Activated CD4-positive, alpha-beta memory T cell treated with anti-CD3 and anti-CD28 coated beads for 36 hours (primary cell): ENCODE measurements at regions of chr7 and their contacts with region 1.

Region 1: DNA sequence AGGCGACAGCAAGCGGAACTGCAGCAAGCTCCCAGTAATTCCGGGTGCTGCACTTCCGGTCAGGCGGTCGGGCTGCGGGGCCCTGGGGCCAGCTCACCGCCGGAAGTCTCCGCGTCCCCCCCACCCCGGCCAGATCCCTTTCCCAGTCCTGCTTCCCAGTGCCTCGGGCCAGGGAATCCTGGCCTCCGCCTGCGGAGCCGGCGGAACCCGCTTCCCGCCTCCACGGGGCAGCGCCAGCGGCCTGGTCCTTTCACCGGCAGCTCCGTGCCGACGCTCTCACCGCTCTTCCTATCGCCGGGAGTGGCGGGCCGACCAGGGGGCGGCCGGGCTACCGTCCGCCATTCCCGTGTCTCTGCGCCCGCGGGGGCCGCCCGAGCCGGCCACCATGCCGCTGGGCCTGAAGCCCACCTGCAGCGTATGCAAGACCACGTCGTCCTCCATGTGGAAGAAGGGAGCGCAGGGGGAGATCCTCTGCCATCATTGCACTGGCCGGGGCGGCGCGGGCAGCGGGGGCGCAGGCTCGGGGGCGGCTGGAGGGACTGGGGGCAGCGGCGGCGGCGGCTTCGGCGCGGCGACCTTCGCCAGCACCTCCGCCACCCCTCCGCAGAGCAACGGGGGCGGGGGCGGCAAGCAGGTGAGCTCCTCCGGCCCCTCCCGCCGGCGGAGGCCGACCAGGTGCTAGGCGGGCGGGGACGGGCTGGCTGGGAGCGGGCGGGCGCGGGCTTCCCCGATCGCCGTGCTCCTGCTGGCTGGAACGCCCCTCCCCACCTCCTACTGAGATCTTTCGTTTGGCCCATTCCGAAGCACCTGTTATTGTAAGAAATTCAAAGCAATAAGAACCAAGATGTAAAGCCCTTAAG is at the start of gene GATAD1:
- DNase-seq: peak; percentile 88
- H3K4me3 Mint-ChIP-seq: peak within 1 kb of the TSS; percentile 82
- H3K27ac Mint-ChIP-seq: peak within 1 kb of the TSS; percentile 81
- H3K4me1 Mint-ChIP-seq: peaks cover 16% of the 10 kb centered on the region
- H3K27me3 Mint-ChIP-seq: no peaks in the 10 kb centered on the region
- total RNA-seq, gene GATAD1: 19.4 to 21.2 TPM

Region 2: DNA sequence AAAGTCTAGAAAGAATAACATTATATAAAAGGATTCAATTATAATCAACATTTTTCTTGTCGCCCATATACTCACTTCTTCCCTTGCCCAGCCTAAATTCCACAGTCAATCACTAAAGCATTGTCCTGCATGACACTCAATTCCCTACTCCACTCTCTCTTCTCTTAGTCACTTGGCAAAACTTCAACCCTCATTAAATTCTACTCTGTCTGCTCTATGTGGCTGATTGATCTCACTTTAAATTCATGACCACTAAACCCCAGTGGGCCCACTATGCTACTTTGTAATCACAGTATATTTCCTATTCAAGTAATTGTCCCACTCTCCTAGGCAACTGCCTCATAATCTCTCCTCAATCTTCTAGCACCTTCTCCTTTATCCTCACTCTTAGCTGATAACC is 621.2 kb before region 1 on chr7:
- CTCF ChIA-PET with region 1: interaction called, 15 read pairs
- POLR2A ChIA-PET with region 1: no interaction called
- intact Hi-C with region 1: loop called (anchors 1 kb)
- DNase-seq: no peak
- H3K4me3 Mint-ChIP-seq: no peak overlapping the region
- H3K27ac Mint-ChIP-seq: no peak overlapping the region
- H3K4me1 Mint-ChIP-seq: no peaks in the 10 kb centered on the region
- H3K27me3 Mint-ChIP-seq: no peaks in the 10 kb centered on the region

Region 3: GRCh38 chr7:91880413-91881241 is 566.9 kb before region 1 on chr7 and contains the start of gene MTERF1:
- CTCF ChIA-PET with region 1: interaction called, 7 read pairs
- POLR2A ChIA-PET with region 1: no interaction called
- intact Hi-C with region 1: loop called (anchors 1 kb)
- DNase-seq: peak; percentile 95
- H3K4me3 Mint-ChIP-seq: peak within 1 kb of the TSS; percentile 96
- H3K27ac Mint-ChIP-seq: peak within 1 kb of the TSS; percentile 83
- H3K4me1 Mint-ChIP-seq: peaks cover 27% of the 10 kb centered on the region
- H3K27me3 Mint-ChIP-seq: no peaks in the 10 kb centered on the region
- total RNA-seq, gene MTERF1: 14.1 to 14.2 TPM

Region 4: GRCh38 chr7:92134271-92135051 is 313.1 kb before region 1 on chr7 and contains the start of gene CYP51A1:
- CTCF ChIA-PET with region 1: interaction called, 5 read pairs
- POLR2A ChIA-PET with region 1: interaction called, 14 read pairs
- intact Hi-C with region 1: loop called (anchors 1 kb)
- DNase-seq: peak; percentile 95
- H3K4me3 Mint-ChIP-seq: peak within 1 kb of the TSS; percentile 99
- H3K27ac Mint-ChIP-seq: peak within 1 kb of the TSS; percentile 100
- H3K4me1 Mint-ChIP-seq: peaks cover 30% of the 10 kb centered on the region
- H3K27me3 Mint-ChIP-seq: peaks cover 2% of the 10 kb centered on the region
- total RNA-seq, gene CYP51A1: 72.3 to 74.7 TPM

Region 5: GRCh38 chr7:92245487-92246362 is 201.8 kb before region 1 on chr7 and contains the starts of genes ANKIB1 and KRIT1:
- CTCF ChIA-PET with region 1: interaction called, 20 read pairs
- POLR2A ChIA-PET with region 1: interaction called, 17 read pairs
- intact Hi-C with region 1: loop called (anchors 1 kb)
- DNase-seq: peak; percentile 92
- H3K4me3 Mint-ChIP-seq: peak within 1 kb of the TSS; percentile 99
- H3K27ac Mint-ChIP-seq: peak within 1 kb of the TSS; percentile 100
- H3K4me1 Mint-ChIP-seq: peaks cover 29% of the 10 kb centered on the region
- H3K27me3 Mint-ChIP-seq: no peaks in the 10 kb centered on the region
- total RNA-seq, gene ANKIB1: 34.8 to 39.9 TPM
- total RNA-seq, gene KRIT1: 29.2 to 29.3 TPM

Region 6: GRCh38 chr7:92461027-92462003 is 13.7 kb after region 1 on chr7:
- CTCF ChIA-PET with region 1: interaction called, 14 read pairs
- POLR2A ChIA-PET with region 1: interaction called, 3 read pairs
- intact Hi-C with region 1: no loop called
- DNase-seq: peak; percentile 41
- H3K4me3 Mint-ChIP-seq: no peak overlapping the region
- H3K27ac Mint-ChIP-seq: no peak overlapping the region
- H3K4me1 Mint-ChIP-seq: no peaks in the 10 kb centered on the region
- H3K27me3 Mint-ChIP-seq: no peaks in the 10 kb centered on the region